ENCODE measurements at regions of chr11 and their contacts with region 1.

Region 1: GRCh38 chr11:65817835-65818742 is 15.7 kb upstream of the SNX32 start:
- DNase-seq: peak; percentile 68 to 97 (median 89)
- ATAC-seq: peak; percentile 93 to 99 (median 96)
- H3K4me3 ChIP-seq: peak overlapping the region; percentile 46 to 71
- H3K4me3 Mint-ChIP-seq: peak overlapping the region; percentile 72 to 82 (median 81)
- H3K27ac ChIP-seq: peak overlapping the region; percentile 51
- H3K27ac Mint-ChIP-seq: peak overlapping the region; percentile 66 to 72
- H3K4me1 ChIP-seq: peaks cover 2 to 15% of the 10 kb centered on the region in 2 experiments
- H3K4me1 Mint-ChIP-seq: peaks cover 12 to 17% (median 16%) of the 10 kb centered on the region in 3 donors
- H3K27me3 ChIP-seq: peaks cover 0 to 9% of the 10 kb centered on the region in 2 experiments
- H3K27me3 Mint-ChIP-seq: no peaks in the 10 kb centered on the region

Region 2: GRCh38 chr11:65779851-65780577 is 38.1 kb before region 1 on chr11:
- CTCF ChIA-PET with region 1: interaction called, 13 read pairs
- POLR2A ChIA-PET with region 1: no interaction called
- DNase-seq: peak; percentile 50 to 84 (median 73)
- ATAC-seq: peak; percentile 59 to 66 (median 65)
- H3K4me3 ChIP-seq: peak overlapping the region; percentile 75 to 80
- H3K4me3 Mint-ChIP-seq: peak overlapping the region; percentile 78 to 84 (median 83)
- H3K27ac ChIP-seq: no peak overlapping the region
- H3K27ac Mint-ChIP-seq: peak overlapping the region in 1 of 2 donors; percentile 39
- H3K4me1 ChIP-seq: peaks cover 2 to 32% of the 10 kb centered on the region in 2 experiments
- H3K4me1 Mint-ChIP-seq: peaks cover 8 to 19% (median 16%) of the 10 kb centered on the region in 3 donors
- H3K27me3 ChIP-seq: peaks cover 0 to 13% of the 10 kb centered on the region in 2 experiments
- H3K27me3 Mint-ChIP-seq: peaks cover 0 to under 1% of the 10 kb centered on the region in 2 donors

Measured in T-cell (primary cell).